Common myeloid progenitor, CD34-positive (primary cell): ENCODE measurements at regions of chr3 and their contacts with region 1.

Region 1: DNA sequence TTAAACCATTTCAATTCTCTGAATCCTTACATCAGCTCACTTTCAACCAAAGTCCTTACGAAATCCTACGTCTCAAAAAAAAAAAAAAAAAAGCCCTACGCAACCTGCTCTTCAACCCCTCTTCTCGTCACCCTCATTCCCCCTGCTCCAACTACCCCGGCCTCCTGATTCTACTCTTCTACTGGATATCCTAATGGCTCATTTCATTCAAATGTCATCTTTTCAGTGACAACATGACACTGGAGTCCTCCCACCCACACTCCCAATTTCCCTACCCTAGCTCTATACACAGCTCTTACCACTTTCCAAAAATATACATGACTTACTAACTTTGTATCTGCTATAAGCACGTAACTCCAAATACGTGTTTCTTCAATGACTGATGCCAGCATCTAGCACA is 11.5 kb downstream of the UBP1 start:
- DNase-seq: no peak
- H3K4me3 ChIP-seq: no peak overlapping the region
- H3K27ac ChIP-seq: no peak overlapping the region
- H3K4me1 ChIP-seq: peaks cover 0 to 3% (median 1%) of the 10 kb centered on the region in 4 experiments
- H3K27me3 ChIP-seq: no peaks in the 10 kb centered on the region

Region 2: DNA sequence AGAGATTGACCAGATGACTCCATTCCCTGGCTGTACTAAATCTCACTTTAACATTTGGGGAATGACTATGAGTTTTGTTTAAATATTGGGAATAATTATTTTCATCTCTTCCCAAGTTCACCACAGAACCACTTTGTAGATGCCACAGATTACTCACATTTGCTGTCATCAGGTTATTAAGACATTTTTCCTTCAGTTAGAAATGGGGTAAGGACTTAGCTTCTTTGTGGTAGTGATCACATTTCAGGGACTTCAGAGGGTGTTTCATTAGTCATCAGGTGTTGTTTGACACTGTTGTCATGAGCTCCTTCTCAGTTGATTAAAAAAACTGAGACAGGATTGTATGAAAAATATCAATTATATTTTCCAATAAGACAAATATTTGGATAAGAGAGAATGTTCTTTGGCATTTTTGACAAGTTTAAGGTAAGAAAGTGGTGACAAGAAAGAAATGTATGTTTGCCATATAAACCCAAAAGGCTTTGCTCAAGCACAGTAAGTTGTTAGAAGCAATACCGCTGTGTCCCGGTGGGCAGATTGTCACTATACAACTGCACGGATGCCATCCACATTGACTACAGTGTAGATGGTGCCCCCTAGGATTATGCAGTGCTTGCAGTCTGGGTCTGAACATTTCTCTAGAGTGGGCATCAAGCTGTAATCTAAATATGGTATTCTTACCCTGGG is 129.2 kb before region 1 on chr3:
- CTCF ChIA-PET with region 1: no interaction called
- POLR2A ChIA-PET with region 1: no interaction called
- DNase-seq: no peak
- H3K4me3 ChIP-seq: no peak overlapping the region
- H3K27ac ChIP-seq: no peak overlapping the region
- H3K4me1 ChIP-seq: no peaks in the 10 kb centered on the region
- H3K27me3 ChIP-seq: no peaks in the 10 kb centered on the region

Region 3: GRCh38 chr3:33439546-33440322 is 11.0 kb after region 1 on chr3:
- CTCF ChIA-PET with region 1: interaction called, 10 read pairs
- POLR2A ChIA-PET with region 1: interaction called, 8 read pairs
- DNase-seq: peak; percentile 32 to 68 (median 55)
- H3K4me3 ChIP-seq: peak overlapping the region; percentile 85 to 97 (median 94)
- H3K27ac ChIP-seq: peak overlapping the region; percentile 15 to 97
- H3K4me1 ChIP-seq: peaks cover 23 to 41% (median 29%) of the 10 kb centered on the region in 4 experiments
- H3K27me3 ChIP-seq: no peaks in the 10 kb centered on the region